AG04449 (cell line): ENCODE measurements at regions of chr17 and their contacts with region 1.

Region 1: GRCh38 chr17:50547035-50547735 is at the start of gene SPATA20:
- DNase-seq: peak; percentile 33
- H3K4me3 ChIP-seq: peak within 1 kb of the TSS; percentile 72
- CTCF ChIP-seq: peak; percentile 94

Region 2: GRCh38 chr17:50493744-50494143 is 53.4 kb before region 1 on chr17:
- CTCF ChIA-PET with region 1: no interaction called
- POLR2A ChIA-PET with region 1: no interaction called
- DNase-seq: no peak
- H3K4me3 ChIP-seq: no peak overlapping the region
- CTCF ChIP-seq: no peak

Region 3: DNA sequence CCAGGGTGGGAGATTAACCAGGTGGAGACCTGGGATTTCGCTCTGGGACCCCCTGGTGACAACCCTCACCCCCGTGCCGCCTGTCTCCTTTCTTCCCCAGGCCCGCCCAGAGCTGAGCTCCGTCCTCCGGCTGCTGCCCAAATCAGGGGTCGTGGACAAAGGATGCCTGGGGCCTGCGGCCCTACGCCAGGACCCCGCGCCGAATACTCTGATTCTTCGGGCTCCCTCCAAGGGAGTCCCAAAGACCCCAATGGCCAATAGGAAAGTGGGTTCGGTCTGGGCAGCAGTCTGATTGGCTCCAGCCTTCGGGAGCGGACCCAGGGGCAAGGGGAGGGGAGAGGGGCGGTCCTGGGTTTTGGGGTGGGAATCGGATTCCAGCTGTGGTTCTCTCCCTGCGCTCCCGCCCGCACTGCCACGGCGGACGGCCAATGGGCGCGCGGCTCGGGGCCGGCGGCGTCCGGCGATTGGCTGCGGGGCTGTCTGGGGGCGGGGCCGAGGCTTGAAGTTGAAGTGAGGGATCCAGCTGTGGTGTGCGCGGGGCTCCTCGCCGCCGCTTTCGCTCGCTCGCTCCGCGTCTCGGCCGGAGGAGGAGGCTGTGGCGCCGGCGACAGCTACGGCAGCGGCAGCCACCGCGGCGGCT is 13.1 kb after region 1 on chr17 and contains the start of gene CACNA1G:
- CTCF ChIA-PET with region 1: interaction called, 69 read pairs
- POLR2A ChIA-PET with region 1: no interaction called
- DNase-seq: no peak
- H3K4me3 ChIP-seq: peak within 1 kb of the TSS; percentile 49
- CTCF ChIP-seq: no peak

Region 4: GRCh38 chr17:50620858-50621257 is 73.7 kb after region 1 on chr17:
- CTCF ChIA-PET with region 1: interaction called, 231 read pairs
- POLR2A ChIA-PET with region 1: interaction called, 3 read pairs
- DNase-seq: no peak
- H3K4me3 ChIP-seq: no peak overlapping the region
- CTCF ChIP-seq: no peak

Region 5: DNA sequence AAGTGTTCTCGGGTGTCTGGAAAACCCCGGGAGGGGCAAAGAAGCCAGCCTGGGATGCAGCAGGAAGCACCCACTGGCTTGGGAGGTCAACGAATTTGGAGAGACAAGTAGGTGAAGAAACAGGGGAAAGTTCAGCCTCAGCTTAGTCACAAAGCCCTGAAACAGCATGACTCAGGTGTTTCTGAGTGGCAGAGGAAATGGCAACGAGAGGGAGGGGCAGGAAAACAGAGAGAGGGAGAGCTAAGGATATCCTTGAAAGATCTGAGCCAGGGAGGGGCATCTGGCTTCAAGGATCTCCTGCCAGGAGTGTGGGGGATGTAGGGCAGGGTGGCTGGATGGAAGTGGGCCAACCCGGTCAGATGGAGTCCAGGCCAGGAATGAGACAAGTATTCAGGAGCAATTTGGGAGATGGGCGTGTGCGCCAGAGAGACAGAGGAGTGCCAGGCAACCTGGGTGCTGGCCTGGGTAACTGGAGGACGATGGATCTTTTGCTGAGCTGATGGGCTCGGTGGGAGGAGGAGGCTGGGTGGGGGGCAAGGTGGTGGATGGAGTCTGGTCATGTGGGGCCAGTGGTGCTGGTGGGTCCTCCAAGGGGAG is 114.7 kb after region 1 on chr17:
- CTCF ChIA-PET with region 1: interaction called, 15 read pairs
- POLR2A ChIA-PET with region 1: no interaction called
- DNase-seq: peak; percentile 52
- H3K4me3 ChIP-seq: no peak overlapping the region
- CTCF ChIP-seq: no peak

Region 6: DNA sequence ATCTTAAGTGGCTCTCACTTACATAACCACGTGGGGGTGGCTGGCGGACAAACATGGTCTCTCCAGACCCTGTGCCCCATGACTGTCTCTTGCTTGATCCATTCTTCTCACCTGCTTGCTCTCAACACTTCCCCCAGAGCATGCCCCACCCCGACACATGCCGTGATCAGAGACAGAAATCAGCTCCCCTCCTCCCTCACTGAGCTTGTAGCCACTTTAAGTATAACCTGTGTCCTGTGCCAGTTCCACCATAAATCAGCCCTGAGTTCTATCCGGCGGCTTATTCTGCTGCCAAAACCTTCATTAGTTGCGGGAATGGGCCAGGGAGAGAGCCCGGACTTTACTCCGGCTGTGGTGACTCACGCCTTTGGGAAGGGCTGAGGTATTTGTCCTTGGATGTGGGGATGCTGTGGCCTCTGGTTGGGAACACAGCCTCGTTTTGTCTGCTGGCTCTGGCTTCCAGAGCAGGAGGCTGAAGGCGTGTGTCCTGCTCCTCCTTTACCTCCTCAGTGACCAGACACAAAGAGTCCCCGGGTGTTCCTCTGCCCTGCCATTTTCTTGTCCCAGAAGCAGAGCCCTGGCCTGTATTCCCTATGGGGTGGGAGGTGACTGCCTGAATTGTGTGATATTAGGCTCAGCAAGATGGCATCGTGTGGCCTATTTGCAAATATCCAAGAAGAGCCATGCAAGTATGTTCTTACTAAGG is 139.5 kb after region 1 on chr17:
- CTCF ChIA-PET with region 1: interaction called, 265 read pairs
- POLR2A ChIA-PET with region 1: no interaction called
- DNase-seq: no peak
- H3K4me3 ChIP-seq: no peak overlapping the region
- CTCF ChIP-seq: no peak

Region 7: DNA sequence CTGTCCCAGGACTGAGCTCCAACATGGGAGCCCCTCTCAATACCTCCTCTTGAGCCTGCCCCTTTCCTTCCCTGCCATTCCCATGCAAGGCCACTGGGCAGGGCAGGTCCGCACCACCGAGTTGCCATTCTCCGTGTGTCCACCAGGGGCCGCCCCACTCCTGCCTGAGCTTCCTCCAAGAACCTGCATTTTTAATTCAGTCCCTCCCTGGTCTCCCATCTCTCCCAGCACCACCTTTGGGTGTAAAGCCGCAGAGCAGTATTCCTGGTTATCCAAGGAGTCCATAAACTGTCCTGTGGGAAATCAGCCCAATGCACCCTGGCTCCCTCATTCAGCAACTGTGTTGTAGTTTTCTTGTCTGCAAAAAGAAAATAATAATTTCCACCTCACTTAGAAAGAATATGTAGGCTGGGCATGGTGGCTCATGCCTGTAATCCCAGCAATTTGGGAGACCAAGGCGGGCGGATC is 236.0 kb after region 1 on chr17:
- CTCF ChIA-PET with region 1: interaction called, 21 read pairs
- POLR2A ChIA-PET with region 1: no interaction called
- DNase-seq: no peak
- H3K4me3 ChIP-seq: no peak overlapping the region
- CTCF ChIP-seq: peak; percentile 99

Region 8: GRCh38 chr17:51397361-51398127 is 850.4 kb after region 1 on chr17:
- CTCF ChIA-PET with region 1: no interaction called
- POLR2A ChIA-PET with region 1: no interaction called
- DNase-seq: peak; percentile 7
- H3K4me3 ChIP-seq: no peak overlapping the region
- CTCF ChIP-seq: no peak